ENCODE measurements at regions of chr4 and their contacts with region 1.

Region 1: GRCh38 chr4:38837849-38838248 is 18.8 kb downstream of the TLR6 start:
- DNase-seq: no peak
- H3K4me3 Mint-ChIP-seq: peak overlapping the region; percentile 24
- H3K27ac Mint-ChIP-seq: peak overlapping the region; percentile 42
- H3K4me1 Mint-ChIP-seq: peaks cover 19% of the 10 kb centered on the region
- H3K27me3 Mint-ChIP-seq: no peaks in the 10 kb centered on the region

Region 2: DNA sequence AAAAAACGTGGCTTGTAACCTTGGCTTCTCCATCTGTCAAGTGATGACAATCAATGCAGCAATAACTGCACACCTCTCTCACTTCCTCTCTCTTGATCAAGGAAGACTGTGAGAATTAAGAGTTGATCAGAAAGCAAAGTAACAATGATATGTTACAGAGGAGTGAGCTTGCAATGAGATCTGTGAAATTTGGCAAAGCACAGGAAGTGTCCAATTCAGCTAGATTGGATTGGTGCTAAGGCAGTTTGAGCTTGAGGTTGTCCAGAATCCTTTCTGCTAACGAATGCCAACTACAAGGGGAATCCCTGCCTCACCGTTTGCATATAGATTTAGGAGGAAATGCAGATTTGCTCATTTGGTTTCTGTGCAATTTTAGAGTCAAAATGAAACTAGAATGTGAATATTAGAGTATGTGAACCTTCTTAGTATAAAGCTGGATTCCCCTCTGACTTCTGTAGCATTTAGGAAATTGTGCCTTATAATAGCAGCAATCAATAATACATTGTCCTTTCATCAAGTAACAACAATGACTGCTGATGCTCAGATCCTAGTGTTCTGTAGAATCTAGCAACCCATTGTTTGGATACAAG is 531.3 kb before region 1 on chr4:
- CTCF ChIA-PET with region 1: no interaction called
- POLR2A ChIA-PET with region 1: no interaction called
- intact Hi-C with region 1: no loop called
- DNase-seq: peak; percentile 59
- H3K4me3 Mint-ChIP-seq: peak overlapping the region; percentile 4
- H3K27ac Mint-ChIP-seq: peak overlapping the region; percentile 51
- H3K4me1 Mint-ChIP-seq: peaks cover 59% of the 10 kb centered on the region
- H3K27me3 Mint-ChIP-seq: peaks cover 2% of the 10 kb centered on the region

Region 3: GRCh38 chr4:38691251-38692008 is 146.4 kb before region 1 on chr4:
- CTCF ChIA-PET with region 1: no interaction called
- POLR2A ChIA-PET with region 1: no interaction called
- intact Hi-C with region 1: no loop called
- DNase-seq: no peak
- H3K4me3 Mint-ChIP-seq: no peak overlapping the region
- H3K27ac Mint-ChIP-seq: no peak overlapping the region
- H3K4me1 Mint-ChIP-seq: peaks cover 22% of the 10 kb centered on the region
- H3K27me3 Mint-ChIP-seq: no peaks in the 10 kb centered on the region

Region 4: DNA sequence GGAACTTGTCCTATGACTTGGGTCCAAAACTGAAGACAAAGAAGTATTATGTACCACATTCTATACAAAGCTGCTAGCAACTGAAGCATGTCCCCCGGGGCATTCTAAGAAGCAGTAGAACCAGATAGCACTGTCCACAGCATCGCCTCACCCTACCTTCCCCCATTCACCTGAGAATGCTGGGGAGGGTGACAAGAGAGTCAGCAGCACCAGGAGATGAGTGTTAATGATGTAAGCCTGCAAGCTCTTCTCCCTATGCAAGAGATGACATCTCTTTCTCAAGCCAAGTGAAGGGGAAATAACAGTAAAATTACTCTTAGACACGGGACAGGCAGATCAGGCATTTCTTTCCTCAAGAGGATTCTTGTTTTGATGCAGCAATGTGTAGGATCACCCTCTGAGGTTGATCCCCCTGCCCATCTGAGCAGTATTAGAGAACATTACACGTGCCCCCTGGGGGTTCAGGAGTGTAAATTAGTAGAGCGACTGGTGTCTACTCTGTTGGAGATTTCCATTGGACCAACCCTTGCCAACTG is 19.3 kb before region 1 on chr4:
- CTCF ChIA-PET with region 1: no interaction called
- POLR2A ChIA-PET with region 1: no interaction called
- intact Hi-C with region 1: loop called (anchors 2 kb)
- DNase-seq: no peak
- H3K4me3 Mint-ChIP-seq: no peak overlapping the region
- H3K27ac Mint-ChIP-seq: no peak overlapping the region
- H3K4me1 Mint-ChIP-seq: peaks cover 22% of the 10 kb centered on the region
- H3K27me3 Mint-ChIP-seq: no peaks in the 10 kb centered on the region

Region 5: DNA sequence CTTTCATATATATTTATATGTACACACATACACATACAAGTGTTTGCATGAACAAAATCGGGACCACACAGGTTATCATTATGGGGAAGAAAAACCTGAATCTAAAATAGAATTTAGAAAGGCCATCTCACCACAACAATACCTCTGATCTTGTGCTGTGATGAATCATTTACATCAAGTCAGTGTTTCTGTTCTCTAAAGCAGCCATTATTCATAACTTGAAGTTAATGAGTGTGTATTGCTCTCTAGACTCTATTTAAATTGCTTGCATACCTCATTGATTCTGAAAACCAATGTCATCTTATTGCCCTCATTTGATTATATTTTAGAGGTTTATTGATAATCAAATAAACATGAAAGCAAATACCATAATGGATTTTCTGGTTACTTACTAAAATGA is 101.3 kb after region 1 on chr4:
- CTCF ChIA-PET with region 1: no interaction called
- POLR2A ChIA-PET with region 1: no interaction called
- intact Hi-C with region 1: no loop called
- DNase-seq: no peak
- H3K4me3 Mint-ChIP-seq: no peak overlapping the region
- H3K27ac Mint-ChIP-seq: peak overlapping the region; percentile 68
- H3K4me1 Mint-ChIP-seq: peaks cover 41% of the 10 kb centered on the region
- H3K27me3 Mint-ChIP-seq: no peaks in the 10 kb centered on the region

Region 6: DNA sequence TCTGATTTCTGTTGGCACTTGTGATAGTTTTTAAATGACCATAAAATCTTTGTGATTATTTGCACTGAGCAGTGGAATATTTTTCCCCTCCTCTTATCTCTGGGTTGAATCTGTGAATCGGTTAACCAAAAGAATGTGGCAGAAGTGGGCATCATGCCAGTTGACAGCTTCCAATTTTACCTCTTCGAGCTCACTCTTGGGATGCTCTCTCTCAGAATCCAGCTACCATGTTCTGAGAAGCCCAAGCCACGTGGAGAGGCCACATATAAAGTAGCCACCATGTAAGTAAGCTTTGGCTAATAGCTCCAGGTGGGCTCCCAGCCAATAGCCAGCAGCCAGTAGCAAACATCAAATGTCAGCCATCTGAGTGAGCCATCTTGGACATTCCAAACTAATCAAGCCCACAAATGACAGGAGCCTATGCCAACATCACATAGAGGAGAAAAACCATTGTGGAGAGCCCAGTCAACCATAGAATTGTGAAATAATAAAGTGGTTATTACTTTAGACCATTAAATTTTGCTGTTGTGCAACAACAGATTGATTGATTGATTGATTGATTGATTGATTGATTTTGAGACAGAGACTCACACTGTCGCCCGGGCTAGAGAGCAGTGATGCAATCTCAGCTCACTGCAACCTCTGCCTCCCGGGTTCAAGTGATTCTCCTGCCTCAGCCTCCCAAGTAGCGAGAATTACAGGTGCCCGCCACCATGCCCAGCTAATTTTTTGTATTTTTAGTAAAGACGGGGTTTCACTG is 331.8 kb after region 1 on chr4:
- CTCF ChIA-PET with region 1: no interaction called
- POLR2A ChIA-PET with region 1: no interaction called
- intact Hi-C with region 1: no loop called
- DNase-seq: no peak
- H3K4me3 Mint-ChIP-seq: no peak overlapping the region
- H3K27ac Mint-ChIP-seq: no peak overlapping the region
- H3K4me1 Mint-ChIP-seq: no peaks in the 10 kb centered on the region
- H3K27me3 Mint-ChIP-seq: no peaks in the 10 kb centered on the region

Measured in activated CD4-positive, alpha-beta memory T cell treated with anti-CD3 and anti-CD28 coated beads for 36 hours (primary cell).